Calu3 (cell line): ENCODE measurements at regions of chr12 and their contacts with region 1.

Region 1: DNA sequence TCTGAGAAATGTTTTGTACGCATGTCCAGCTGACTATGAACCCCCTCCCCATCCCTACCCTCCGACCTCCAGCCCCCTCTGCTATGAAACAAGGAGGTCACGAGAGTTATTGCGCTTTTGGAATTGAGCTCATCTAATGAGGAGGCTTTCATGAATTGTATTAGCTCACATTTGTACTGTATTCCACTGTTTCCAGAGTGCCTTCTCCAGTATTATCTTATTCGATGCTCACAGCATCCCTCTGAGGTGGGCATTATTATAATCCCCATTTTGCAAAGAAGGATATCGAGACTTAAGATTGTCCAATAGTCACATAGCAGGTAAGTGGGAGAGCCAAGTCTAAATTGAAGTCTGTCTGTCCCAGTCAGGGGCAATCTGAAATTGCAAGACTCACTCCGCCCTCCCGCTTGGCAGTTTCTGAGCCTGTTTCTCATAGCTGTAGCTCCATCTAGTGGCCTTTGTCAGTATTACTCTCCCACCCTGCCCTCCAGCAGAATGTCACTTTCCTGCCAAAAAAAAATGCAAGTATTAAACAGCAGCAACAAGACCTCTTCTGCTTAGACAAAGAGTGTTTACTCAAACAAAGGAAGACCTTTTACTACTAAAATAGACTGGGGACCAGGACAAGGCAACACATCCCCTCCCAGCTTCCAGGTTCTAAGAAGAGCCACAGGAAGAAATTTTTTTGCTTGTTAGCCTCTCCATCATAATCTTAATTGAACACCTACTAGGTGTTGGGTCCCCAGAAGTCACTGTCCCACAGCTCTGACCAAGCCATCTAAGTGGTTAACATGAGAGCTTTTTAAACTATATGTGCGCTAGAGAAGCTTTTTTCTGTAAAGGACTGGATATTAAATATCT is 48.6 kb upstream of the TMEM233 start:
- DNase-seq: peak; percentile 80
- H3K4me3 Mint-ChIP-seq: no peak overlapping the region
- H3K27ac Mint-ChIP-seq: no peak overlapping the region
- H3K4me1 Mint-ChIP-seq: no peaks in the 10 kb centered on the region
- H3K27me3 Mint-ChIP-seq: peaks cover 79% of the 10 kb centered on the region
- CTCF ChIP-seq: peak; percentile 86

Region 2: DNA sequence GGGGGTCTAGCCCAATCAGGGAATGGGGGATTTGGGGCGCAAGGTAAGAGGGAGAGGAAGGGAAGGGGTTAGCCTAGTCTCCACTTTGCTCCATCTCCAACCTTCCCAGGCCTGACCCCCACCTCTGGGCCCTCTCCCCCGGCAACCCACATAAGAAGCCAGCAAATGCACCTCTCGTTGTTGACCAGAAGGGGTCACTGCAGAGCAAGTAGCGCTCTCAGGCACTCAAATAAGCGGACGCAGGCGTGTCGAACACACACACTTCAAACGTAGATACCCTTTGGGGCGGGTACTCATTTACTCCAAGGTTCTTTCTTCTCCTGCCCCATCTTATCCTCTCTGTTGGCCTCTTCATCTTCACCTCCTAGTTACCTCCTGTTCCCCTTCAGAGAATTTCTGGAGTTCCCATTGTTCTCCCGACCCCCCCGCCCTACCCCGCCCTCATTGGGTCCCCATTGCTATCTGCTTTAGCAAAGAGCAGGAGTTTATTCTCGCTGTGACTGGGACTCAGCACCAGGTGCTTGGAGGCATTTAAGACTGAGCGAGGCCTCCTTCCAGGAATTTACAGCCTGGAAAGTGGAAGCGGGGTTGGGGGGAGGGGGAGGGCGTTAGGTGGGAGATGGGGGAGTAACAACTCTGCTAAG is 565.1 kb before region 1 on chr12:
- CTCF ChIA-PET with region 1: no interaction called
- intact Hi-C with region 1: loop called (anchors 1 kb)
- DNase-seq: peak; percentile 60
- H3K4me3 Mint-ChIP-seq: no peak overlapping the region
- H3K27ac Mint-ChIP-seq: no peak overlapping the region
- H3K4me1 Mint-ChIP-seq: no peaks in the 10 kb centered on the region
- H3K27me3 Mint-ChIP-seq: peaks cover 41% of the 10 kb centered on the region
- CTCF ChIP-seq: peak; percentile 46

Region 3: GRCh38 chr12:119115296-119115905 is 429.6 kb before region 1 on chr12:
- CTCF ChIA-PET with region 1: no interaction called
- intact Hi-C with region 1: loop called (anchors 5 kb)
- DNase-seq: peak; percentile 63
- H3K4me3 Mint-ChIP-seq: no peak overlapping the region
- H3K27ac Mint-ChIP-seq: no peak overlapping the region
- H3K4me1 Mint-ChIP-seq: no peaks in the 10 kb centered on the region
- H3K27me3 Mint-ChIP-seq: peaks cover 28% of the 10 kb centered on the region
- CTCF ChIP-seq: peak; percentile 87

Region 4: GRCh38 chr12:119328111-119328510 is 216.9 kb before region 1 on chr12:
- CTCF ChIA-PET with region 1: no interaction called
- intact Hi-C with region 1: loop called (anchors 10 kb)
- DNase-seq: peak; percentile 40
- H3K4me3 Mint-ChIP-seq: no peak overlapping the region
- H3K27ac Mint-ChIP-seq: no peak overlapping the region
- H3K4me1 Mint-ChIP-seq: no peaks in the 10 kb centered on the region
- H3K27me3 Mint-ChIP-seq: peaks cover 48% of the 10 kb centered on the region
- CTCF ChIP-seq: no peak

Region 5: DNA sequence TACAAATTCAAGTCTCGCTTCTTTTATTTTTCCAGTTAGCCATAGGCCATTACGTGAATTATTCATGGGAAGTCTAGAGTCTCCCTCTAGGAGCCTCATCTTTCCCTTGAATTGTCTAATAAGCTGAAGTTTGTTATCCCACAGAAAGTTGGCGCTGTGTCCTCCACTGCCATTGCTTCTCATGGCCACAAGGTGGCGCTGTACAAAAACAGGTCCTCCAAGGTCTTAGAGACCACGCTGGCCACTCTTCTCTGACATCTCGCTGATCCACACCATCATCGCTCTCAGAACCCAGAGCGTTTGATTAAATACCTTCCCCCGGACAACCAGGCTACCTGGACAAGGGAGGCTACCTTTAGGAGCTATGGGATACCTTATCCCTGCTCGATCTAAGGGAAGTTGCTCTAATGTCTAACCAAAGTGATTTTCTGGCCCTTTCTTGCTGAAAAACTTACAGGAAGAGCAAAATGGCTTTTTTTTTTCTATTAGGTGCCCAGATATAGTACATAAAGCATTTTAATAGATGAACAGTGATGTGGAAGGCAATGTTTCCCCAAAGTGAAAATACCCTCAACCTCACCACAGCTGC is 100.4 kb before region 1 on chr12:
- CTCF ChIA-PET with region 1: interaction called, 7 read pairs
- intact Hi-C with region 1: loop called (anchors 2 kb)
- DNase-seq: peak; percentile 52
- H3K4me3 Mint-ChIP-seq: no peak overlapping the region
- H3K27ac Mint-ChIP-seq: no peak overlapping the region
- H3K4me1 Mint-ChIP-seq: no peaks in the 10 kb centered on the region
- H3K27me3 Mint-ChIP-seq: peaks cover 48% of the 10 kb centered on the region
- CTCF ChIP-seq: peak; percentile 93

Region 6: DNA sequence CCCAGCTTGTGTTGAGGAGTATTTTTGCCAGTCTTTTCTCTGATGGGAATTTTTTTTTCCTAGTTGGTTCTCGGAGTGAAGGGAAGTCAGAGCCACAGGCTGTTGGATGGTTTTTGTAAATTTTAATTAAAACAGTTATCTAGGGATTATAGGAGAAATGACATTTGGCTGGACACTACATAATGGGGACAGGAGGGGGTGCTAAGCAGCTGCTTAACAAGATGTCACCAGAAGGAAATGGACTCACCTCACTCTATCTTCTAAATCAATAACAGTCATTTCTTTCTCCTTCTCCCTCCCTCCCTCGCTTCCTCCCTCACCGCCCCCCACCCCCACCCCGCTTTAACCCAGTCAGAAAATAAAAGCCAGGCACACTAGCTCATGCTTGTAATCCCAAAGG is 44.8 kb before region 1 on chr12:
- CTCF ChIA-PET with region 1: interaction called, 3 read pairs
- intact Hi-C with region 1: loop called (anchors 5 kb)
- DNase-seq: no peak
- H3K4me3 Mint-ChIP-seq: no peak overlapping the region
- H3K27ac Mint-ChIP-seq: no peak overlapping the region
- H3K4me1 Mint-ChIP-seq: no peaks in the 10 kb centered on the region
- H3K27me3 Mint-ChIP-seq: peaks cover 66% of the 10 kb centered on the region
- CTCF ChIP-seq: no peak

Region 7: GRCh38 chr12:119578112-119578511 is 33.1 kb after region 1 on chr12:
- CTCF ChIA-PET with region 1: no interaction called
- intact Hi-C with region 1: no loop called
- DNase-seq: peak; percentile 65
- H3K4me3 Mint-ChIP-seq: no peak overlapping the region
- H3K27ac Mint-ChIP-seq: no peak overlapping the region
- H3K4me1 Mint-ChIP-seq: peaks cover 8% of the 10 kb centered on the region
- H3K27me3 Mint-ChIP-seq: peaks cover 15% of the 10 kb centered on the region
- CTCF ChIP-seq: no peak

Region 8: GRCh38 chr12:119649202-119649808 is 104.3 kb after region 1 on chr12:
- CTCF ChIA-PET with region 1: no interaction called
- intact Hi-C with region 1: loop called (anchors 5 kb)
- DNase-seq: no peak
- H3K4me3 Mint-ChIP-seq: no peak overlapping the region
- H3K27ac Mint-ChIP-seq: no peak overlapping the region
- H3K4me1 Mint-ChIP-seq: no peaks in the 10 kb centered on the region
- H3K27me3 Mint-ChIP-seq: no peaks in the 10 kb centered on the region
- CTCF ChIP-seq: peak; percentile 71